ENCODE measurements at regions of chr12 and their contacts with region 1.

Region 1: GRCh38 chr12:63862214-63863107 is 18.0 kb downstream of the SRGAP1 start:
- DNase-seq: peak; percentile 79
- H3K4me3 Mint-ChIP-seq: peak overlapping the region; percentile 58
- H3K27ac Mint-ChIP-seq: peak overlapping the region; percentile 78
- H3K4me1 Mint-ChIP-seq: peaks cover 36% of the 10 kb centered on the region
- H3K27me3 Mint-ChIP-seq: no peaks in the 10 kb centered on the region
- CTCF ChIP-seq: no peak

Region 2: GRCh38 chr12:63779498-63780481 is 82.7 kb before region 1 on chr12 and contains the start of gene RXYLT1:
- CTCF ChIA-PET with region 1: no interaction called
- intact Hi-C with region 1: no loop called
- DNase-seq: peak; percentile 89
- H3K4me3 Mint-ChIP-seq: peak within 1 kb of the TSS; percentile 96
- H3K27ac Mint-ChIP-seq: peak within 1 kb of the TSS; percentile 90
- H3K4me1 Mint-ChIP-seq: no peaks in the 10 kb centered on the region
- H3K27me3 Mint-ChIP-seq: no peaks in the 10 kb centered on the region
- CTCF ChIP-seq: no peak
- total RNA-seq, gene RXYLT1: 26.0 and 28.6 TPM in 2 replicates

Region 3: GRCh38 chr12:63897931-63898330 is 35.5 kb after region 1 on chr12:
- CTCF ChIA-PET with region 1: interaction called, 4 read pairs
- intact Hi-C with region 1: loop called (anchors 5 kb)
- DNase-seq: no peak
- H3K4me3 Mint-ChIP-seq: no peak overlapping the region
- H3K27ac Mint-ChIP-seq: peak overlapping the region; percentile 28
- H3K4me1 Mint-ChIP-seq: peaks cover 55% of the 10 kb centered on the region
- H3K27me3 Mint-ChIP-seq: no peaks in the 10 kb centered on the region
- CTCF ChIP-seq: no peak

Region 4: GRCh38 chr12:64010069-64010699 is 147.7 kb after region 1 on chr12:
- CTCF ChIA-PET with region 1: no interaction called
- intact Hi-C with region 1: no loop called
- DNase-seq: no peak
- H3K4me3 Mint-ChIP-seq: no peak overlapping the region
- H3K27ac Mint-ChIP-seq: no peak overlapping the region
- H3K4me1 Mint-ChIP-seq: peaks cover 16% of the 10 kb centered on the region
- H3K27me3 Mint-ChIP-seq: no peaks in the 10 kb centered on the region
- CTCF ChIP-seq: no peak

Measured in Calu3 (cell line).